IMR-90 (cell line): ENCODE measurements at regions of chr2 and their contacts with region 1.

Region 1: GRCh38 chr2:227406177-227407031 is 18.7 kb upstream of the SCYGR1 start:
- DNase-seq: peak; percentile 99
- ATAC-seq: peak; percentile 91
- H3K4me3 ChIP-seq: no peak overlapping the region
- H3K27ac ChIP-seq: peak overlapping the region; percentile 77
- H3K4me1 ChIP-seq: peaks cover 1% of the 10 kb centered on the region; the same call in 1 of the 2 replicates
- H3K27me3 ChIP-seq: no peaks in the 10 kb centered on the region
- CTCF ChIP-seq: peak; percentile 96
- POLR2A ChIP-seq: no peak
- RAD21 ChIP-seq: peak; percentile 95

Region 2: GRCh38 chr2:227335713-227336112 is 70.7 kb before region 1 on chr2:
- CTCF ChIA-PET with region 1: no interaction called
- POLR2A ChIA-PET with region 1: no interaction called
- dilution Hi-C with region 1: no loop called
- in situ Hi-C with region 1: no loop called
- intact Hi-C with region 1: no loop called
- DNase-seq: no peak
- ATAC-seq: no peak
- H3K4me3 ChIP-seq: no peak overlapping the region
- H3K27ac ChIP-seq: no peak overlapping the region
- H3K4me1 ChIP-seq: no peaks in the 10 kb centered on the region
- H3K27me3 ChIP-seq: no peaks in the 10 kb centered on the region
- CTCF ChIP-seq: no peak
- POLR2A ChIP-seq: no peak
- RAD21 ChIP-seq: no peak

Region 3: GRCh38 chr2:227471924-227472264 is 65.5 kb after region 1 on chr2 and contains the start of gene AGFG1:
- CTCF ChIA-PET with region 1: interaction called, 4 read pairs
- POLR2A ChIA-PET with region 1: no interaction called
- dilution Hi-C with region 1: no loop called
- in situ Hi-C with region 1: no loop called
- intact Hi-C with region 1: loop called (anchors 2 kb)
- DNase-seq: peak; percentile 67
- ATAC-seq: peak; percentile 93
- H3K4me3 ChIP-seq: peak within 1 kb of the TSS; percentile 99
- H3K27ac ChIP-seq: peak within 1 kb of the TSS; percentile 83
- H3K4me1 ChIP-seq: peaks cover 5% of the 10 kb centered on the region
- H3K27me3 ChIP-seq: no peaks in the 10 kb centered on the region
- CTCF ChIP-seq: peak; percentile 97
- POLR2A ChIP-seq: peak; percentile 81
- RAD21 ChIP-seq: peak; percentile 58
- total RNA-seq, gene AGFG1: 93.6 and 126 TPM in 2 replicates

Region 4: DNA sequence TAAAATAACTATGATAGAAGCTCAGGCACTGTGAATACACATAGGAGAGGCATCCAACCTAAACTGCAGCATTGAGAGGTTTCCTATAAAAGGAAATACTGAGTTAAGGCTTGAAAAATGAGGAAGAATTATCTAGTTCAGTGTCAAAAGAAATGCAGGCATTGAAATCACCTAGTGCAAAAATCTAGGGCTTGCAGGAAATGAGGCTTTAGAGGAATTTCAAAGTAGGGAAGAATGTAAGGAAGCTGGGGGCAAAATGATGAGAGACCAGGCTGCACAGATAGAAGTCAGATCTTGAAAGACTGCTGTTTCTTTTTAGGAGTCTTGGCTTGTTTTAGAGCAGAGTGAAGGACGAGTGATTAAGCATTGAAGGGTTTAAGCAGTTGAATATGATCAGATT is 164.2 kb after region 1 on chr2:
- CTCF ChIA-PET with region 1: interaction called, 5 read pairs
- POLR2A ChIA-PET with region 1: no interaction called
- dilution Hi-C with region 1: no loop called
- in situ Hi-C with region 1: no loop called
- intact Hi-C with region 1: loop called (anchors 5 kb)
- DNase-seq: peak; percentile 3
- ATAC-seq: peak; percentile 24; the same call in 1 of the 2 replicates
- H3K4me3 ChIP-seq: no peak overlapping the region
- H3K27ac ChIP-seq: no peak overlapping the region
- H3K4me1 ChIP-seq: peaks cover 3% of the 10 kb centered on the region; the same call in 1 of the 2 replicates
- H3K27me3 ChIP-seq: no peaks in the 10 kb centered on the region
- CTCF ChIP-seq: no peak
- POLR2A ChIP-seq: no peak
- RAD21 ChIP-seq: no peak

Region 5: DNA sequence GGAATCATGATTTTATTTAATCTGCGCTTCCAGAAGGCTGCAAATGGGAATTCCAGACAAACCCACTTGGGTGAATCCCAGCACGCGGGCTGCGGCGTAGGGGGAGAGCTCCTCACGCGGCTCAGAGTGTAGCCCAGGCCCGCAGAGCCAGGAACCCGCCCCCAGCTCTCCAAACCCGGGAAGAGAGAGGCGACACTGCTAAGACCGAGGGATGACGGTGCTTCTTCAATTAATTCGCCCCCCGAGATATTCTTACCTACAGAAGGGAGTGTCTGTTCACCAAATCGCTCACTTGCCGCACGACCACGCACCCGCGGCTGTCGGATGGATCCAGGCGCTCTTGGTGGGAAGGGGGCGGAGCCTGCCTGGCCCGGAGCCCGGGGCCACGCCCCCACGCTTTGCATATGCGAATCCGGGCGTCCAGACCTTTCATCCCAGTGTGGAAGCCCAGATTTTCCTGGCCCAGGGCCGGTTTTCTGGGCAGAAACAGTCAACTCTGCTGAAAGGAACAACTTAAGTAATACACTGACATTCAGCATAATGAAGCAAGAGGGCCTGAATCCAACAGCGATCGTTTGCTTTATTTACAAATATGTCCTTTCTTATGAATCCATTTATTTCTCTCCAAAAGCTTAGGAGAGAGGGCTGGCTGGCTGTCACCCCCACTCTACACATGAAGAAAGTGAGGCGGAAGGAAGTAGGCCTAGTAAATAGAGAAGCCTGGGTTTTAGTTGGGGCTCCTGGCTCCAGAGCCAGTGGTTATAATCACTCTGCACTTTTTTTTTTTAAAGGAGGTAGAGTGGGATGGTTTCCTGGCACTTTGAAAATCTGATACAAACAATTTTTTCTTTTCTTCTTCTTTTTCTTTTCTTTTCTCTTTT is 311.5 kb after region 1 on chr2 and contains the start of gene SLC19A3:
- CTCF ChIA-PET with region 1: no interaction called
- POLR2A ChIA-PET with region 1: no interaction called
- dilution Hi-C with region 1: no loop called
- in situ Hi-C with region 1: no loop called
- intact Hi-C with region 1: loop called (anchors 1 kb)
- DNase-seq: peak; percentile 50
- ATAC-seq: peak; percentile 97
- H3K4me3 ChIP-seq: peak within 1 kb of the TSS; percentile 45
- H3K27ac ChIP-seq: no peak within 1 kb of the TSS
- H3K4me1 ChIP-seq: no peaks in the 10 kb centered on the region
- H3K27me3 ChIP-seq: peaks cover 2% of the 10 kb centered on the region; the same call in 1 of the 2 replicates
- CTCF ChIP-seq: no peak
- POLR2A ChIP-seq: no peak
- RAD21 ChIP-seq: no peak
- total RNA-seq, gene SLC19A3: under 0.01 TPM in 1 of 2 replicates, not detected in the other

Region 6: DNA sequence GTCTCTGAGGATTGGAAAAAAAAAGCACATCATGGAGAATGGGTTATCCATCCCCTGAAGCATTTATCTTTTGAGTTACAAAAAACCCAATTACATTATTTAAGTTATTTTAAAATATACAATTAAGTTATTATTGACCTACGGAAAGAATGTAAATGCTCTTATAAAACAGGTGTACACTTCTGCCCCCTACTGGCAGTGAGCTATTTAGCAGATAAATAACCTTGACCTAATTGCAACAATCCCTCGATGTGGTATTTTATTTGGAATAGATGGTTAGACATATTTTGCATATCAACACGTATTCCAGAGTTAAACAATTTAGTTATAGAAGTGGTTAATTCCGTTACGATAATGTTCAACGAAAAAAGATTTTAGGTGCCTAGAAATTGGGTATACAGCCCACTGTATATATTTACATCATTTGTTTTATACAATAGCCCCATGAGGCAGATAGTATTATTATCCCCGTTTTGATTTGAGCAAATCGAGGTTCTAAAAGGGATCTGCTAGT is 455.9 kb after region 1 on chr2:
- CTCF ChIA-PET with region 1: no interaction called
- POLR2A ChIA-PET with region 1: no interaction called
- dilution Hi-C with region 1: no loop called
- in situ Hi-C with region 1: no loop called
- intact Hi-C with region 1: loop called (anchors 1 kb)
- DNase-seq: peak; percentile 64
- ATAC-seq: peak; percentile 36; the same call in 1 of the 2 replicates
- H3K4me3 ChIP-seq: no peak overlapping the region
- H3K27ac ChIP-seq: no peak overlapping the region
- H3K4me1 ChIP-seq: peaks cover 10% of the 10 kb centered on the region
- H3K27me3 ChIP-seq: no peaks in the 10 kb centered on the region
- CTCF ChIP-seq: peak; percentile 60
- POLR2A ChIP-seq: no peak
- RAD21 ChIP-seq: peak; percentile 45

Region 7: DNA sequence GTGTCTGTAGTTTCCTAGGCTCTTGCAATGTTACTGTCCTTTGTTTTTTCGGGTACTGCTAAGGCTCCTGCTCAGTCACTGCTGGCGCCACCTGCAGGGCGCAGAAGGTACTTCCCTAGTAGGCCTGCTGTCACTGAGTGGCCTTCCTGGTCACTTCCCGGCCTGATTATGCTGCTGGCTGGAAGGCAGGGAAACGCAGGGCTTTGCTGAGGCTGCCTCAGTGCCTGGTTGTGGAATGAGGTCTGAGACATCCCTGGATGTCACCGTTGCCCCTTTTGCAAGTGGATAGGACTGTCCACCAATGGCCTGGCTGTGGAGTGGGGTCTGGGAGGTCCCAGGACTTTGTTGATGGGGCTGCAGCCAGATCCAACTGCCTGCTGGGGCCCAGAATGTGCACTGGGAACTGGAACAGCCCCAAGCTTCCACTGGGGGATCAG is 478.1 kb after region 1 on chr2:
- CTCF ChIA-PET with region 1: interaction called, 3 read pairs
- POLR2A ChIA-PET with region 1: no interaction called
- dilution Hi-C with region 1: no loop called
- in situ Hi-C with region 1: loop called (anchors 10 kb)
- intact Hi-C with region 1: loop called (anchors 5 kb)
- DNase-seq: peak; percentile 72
- ATAC-seq: peak; percentile 99
- H3K4me3 ChIP-seq: no peak overlapping the region
- H3K27ac ChIP-seq: no peak overlapping the region
- H3K4me1 ChIP-seq: 0 out of 2 replicates have a peak, but pooled peaks cover 1% of the 10 kb centered on the region
- H3K27me3 ChIP-seq: no peaks in the 10 kb centered on the region
- CTCF ChIP-seq: peak; percentile 76
- POLR2A ChIP-seq: no peak
- RAD21 ChIP-seq: peak; percentile 65